Endothelial cell of umbilical vein (primary cell): ENCODE measurements at regions of chr2 and their contacts with region 1.

Region 1: GRCh38 chr2:144426981-144427479 is 92.9 kb downstream of the ZEB2 start:
- DNase-seq: peak; percentile 82
- H3K4me3 ChIP-seq: no peak overlapping the region
- H3K27ac ChIP-seq: peak overlapping the region; percentile 76
- H3K4me1 ChIP-seq: peaks cover 16% of the 10 kb centered on the region
- H3K27me3 ChIP-seq: no peaks in the 10 kb centered on the region
- CTCF ChIP-seq: no peak
- POLR2A ChIP-seq: no peak

Region 2: DNA sequence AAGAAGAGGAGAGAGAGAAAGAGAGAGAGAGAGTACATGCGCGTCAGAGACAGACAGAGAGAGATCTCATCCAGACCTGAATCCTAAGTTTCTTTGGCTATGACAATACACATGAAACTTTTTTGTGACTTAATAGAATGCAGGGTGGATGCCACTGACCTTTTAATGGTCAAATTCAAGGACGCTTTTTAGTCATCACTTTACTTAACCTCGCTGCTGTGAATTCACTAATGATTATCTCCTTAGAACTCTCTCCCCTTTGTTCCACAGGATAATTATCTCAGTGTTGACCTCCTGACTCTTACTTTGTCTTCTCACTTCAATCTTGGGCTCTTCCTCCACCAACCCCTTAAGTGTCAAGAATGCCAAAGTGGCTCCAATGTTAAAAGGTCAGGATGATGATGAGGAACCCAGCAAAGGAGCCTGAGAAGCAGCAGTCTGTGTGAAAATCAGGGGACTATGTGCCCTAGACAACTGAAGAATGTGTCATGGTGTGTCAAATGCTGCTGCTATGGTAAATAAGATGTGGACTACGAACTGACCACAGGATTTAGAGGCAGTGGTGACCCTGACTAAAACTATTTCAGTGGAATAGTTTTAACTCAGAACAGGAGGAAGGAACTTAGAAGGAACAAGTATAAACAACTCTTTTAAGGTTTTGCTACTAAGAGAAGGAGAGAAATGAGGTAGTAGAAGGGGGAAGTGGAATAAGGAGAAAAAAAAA is 289.2 kb before region 1 on chr2:
- CTCF ChIA-PET with region 1: no interaction called
- POLR2A ChIA-PET with region 1: no interaction called
- dilution Hi-C with region 1: no loop called
- intact Hi-C with region 1: no loop called
- DNase-seq: no peak
- H3K4me3 ChIP-seq: no peak overlapping the region
- H3K27ac ChIP-seq: no peak overlapping the region
- H3K4me1 ChIP-seq: no peaks in the 10 kb centered on the region
- H3K27me3 ChIP-seq: no peaks in the 10 kb centered on the region
- CTCF ChIP-seq: no peak
- POLR2A ChIP-seq: no peak

Region 3: GRCh38 chr2:144350151-144350802 is 76.8 kb before region 1 on chr2:
- CTCF ChIA-PET with region 1: no interaction called
- POLR2A ChIA-PET with region 1: no interaction called
- dilution Hi-C with region 1: no loop called
- intact Hi-C with region 1: loop called (anchors 1 kb)
- DNase-seq: peak; percentile 99
- H3K4me3 ChIP-seq: peak overlapping the region in 2 of 3 experiments; percentile 0 to 9
- H3K27ac ChIP-seq: peak overlapping the region; percentile 79
- H3K4me1 ChIP-seq: peaks cover 32% of the 10 kb centered on the region
- H3K27me3 ChIP-seq: no peaks in the 10 kb centered on the region
- CTCF ChIP-seq: no peak
- POLR2A ChIP-seq: no peak

Region 4: GRCh38 chr2:144357623-144358373 is 69.2 kb before region 1 on chr2:
- CTCF ChIA-PET with region 1: no interaction called
- POLR2A ChIA-PET with region 1: no interaction called
- dilution Hi-C with region 1: no loop called
- intact Hi-C with region 1: loop called (anchors 1 kb)
- DNase-seq: peak; percentile 92
- H3K4me3 ChIP-seq: no peak overlapping the region
- H3K27ac ChIP-seq: peak overlapping the region; percentile 82
- H3K4me1 ChIP-seq: peaks cover 15% of the 10 kb centered on the region
- H3K27me3 ChIP-seq: no peaks in the 10 kb centered on the region
- CTCF ChIP-seq: no peak
- POLR2A ChIP-seq: no peak